Mammary epithelial cell (primary cell): ENCODE measurements at regions of chr2 and their contacts with region 1.

Region 1: GRCh38 chr2:102806250-102806837 is 44.5 kb downstream of the TMEM182 start:
- DNase-seq: peak; percentile 58
- H3K4me3 ChIP-seq: no peak overlapping the region
- H3K27ac ChIP-seq: no peak overlapping the region
- H3K4me1 ChIP-seq: peaks cover 8% of the 10 kb centered on the region
- H3K27me3 ChIP-seq: no peaks in the 10 kb centered on the region
- CTCF ChIP-seq: peak; percentile 78 to 87

Region 2: DNA sequence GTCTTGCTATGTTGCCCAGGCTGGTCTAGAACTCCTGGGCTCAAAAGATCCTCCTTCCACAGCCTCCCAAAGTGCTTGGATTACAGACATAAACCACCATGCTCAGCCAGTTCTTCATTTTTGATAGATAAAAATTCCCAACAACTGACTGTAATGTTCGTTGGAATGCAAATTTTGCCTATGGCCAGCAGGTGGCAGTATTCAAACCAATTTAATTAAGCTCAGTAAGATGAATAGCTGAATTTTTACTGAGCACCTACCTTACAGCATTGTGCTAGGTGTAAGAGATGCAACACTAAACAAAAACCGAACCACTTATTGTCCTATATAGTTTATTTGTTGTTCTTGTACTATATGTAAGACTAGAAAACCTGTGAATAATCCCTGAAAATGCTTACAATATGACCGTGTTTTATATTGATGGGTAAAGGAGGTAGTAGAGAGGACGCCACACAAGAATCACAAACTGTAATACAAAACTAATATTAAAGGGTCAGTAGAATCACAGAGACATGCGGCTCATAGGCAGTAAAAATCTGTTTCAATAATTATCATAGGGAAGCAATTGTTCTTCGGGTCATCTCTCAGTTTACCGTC is 52.7 kb before region 1 on chr2:
- CTCF ChIA-PET with region 1: interaction called, 17 read pairs
- dilution Hi-C with region 1: no loop called
- in situ Hi-C with region 1: no loop called
- intact Hi-C with region 1: loop called (anchors 1 kb)
- DNase-seq: peak; percentile 47
- H3K4me3 ChIP-seq: no peak overlapping the region
- H3K27ac ChIP-seq: no peak overlapping the region
- H3K4me1 ChIP-seq: no peaks in the 10 kb centered on the region
- H3K27me3 ChIP-seq: no peaks in the 10 kb centered on the region
- CTCF ChIP-seq: peak; percentile 73 to 82